ENCODE measurements at regions of chr2 and their contacts with region 1.

Region 1: DNA sequence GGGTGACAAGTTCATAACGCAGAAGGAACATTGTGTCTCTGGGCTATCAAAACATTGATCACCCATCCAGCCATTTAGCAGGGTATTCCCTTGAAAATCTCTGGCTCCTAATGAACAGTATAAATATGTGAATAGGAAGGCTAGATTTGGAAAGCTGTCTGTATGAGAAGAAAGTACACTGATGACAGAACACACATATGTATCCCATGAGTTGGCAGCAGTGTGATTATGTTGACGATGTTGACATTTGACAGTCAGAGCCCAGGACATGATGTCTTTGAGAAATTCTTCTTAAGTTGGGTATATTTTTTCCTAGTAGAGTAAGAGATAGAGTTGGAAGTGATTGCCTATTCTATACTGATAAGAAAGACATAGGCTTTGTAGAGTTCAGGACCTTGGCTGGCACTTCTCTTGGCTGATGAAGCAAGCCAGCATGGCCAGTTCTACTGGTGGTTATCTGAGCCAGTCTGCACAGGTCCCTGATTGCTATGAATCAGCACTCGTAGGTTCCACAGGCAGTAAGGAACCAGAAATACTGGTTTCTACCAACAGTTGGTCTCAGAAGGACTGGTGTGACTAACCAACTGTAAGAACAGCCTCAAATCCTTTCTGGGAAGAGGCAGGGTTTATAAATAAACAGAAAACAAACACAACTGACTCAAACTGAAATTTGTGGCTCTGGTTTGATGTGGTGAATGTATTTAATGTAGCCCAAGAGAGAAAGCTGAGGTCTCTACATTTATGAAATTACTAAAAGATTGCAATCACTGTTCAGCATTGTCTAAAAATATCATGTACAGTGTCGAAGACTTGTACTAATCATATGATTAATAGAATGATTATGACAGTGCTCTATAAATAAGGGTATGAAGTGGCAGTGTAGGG is 43.9 kb upstream of the RAPH1 start:
- DNase-seq: peak; percentile 54
- H3K4me3 Mint-ChIP-seq: no peak overlapping the region
- H3K27ac Mint-ChIP-seq: peak overlapping the region; percentile 67
- H3K4me1 Mint-ChIP-seq: peaks cover 38% of the 10 kb centered on the region
- H3K27me3 Mint-ChIP-seq: peaks cover 41% of the 10 kb centered on the region

Region 2: DNA sequence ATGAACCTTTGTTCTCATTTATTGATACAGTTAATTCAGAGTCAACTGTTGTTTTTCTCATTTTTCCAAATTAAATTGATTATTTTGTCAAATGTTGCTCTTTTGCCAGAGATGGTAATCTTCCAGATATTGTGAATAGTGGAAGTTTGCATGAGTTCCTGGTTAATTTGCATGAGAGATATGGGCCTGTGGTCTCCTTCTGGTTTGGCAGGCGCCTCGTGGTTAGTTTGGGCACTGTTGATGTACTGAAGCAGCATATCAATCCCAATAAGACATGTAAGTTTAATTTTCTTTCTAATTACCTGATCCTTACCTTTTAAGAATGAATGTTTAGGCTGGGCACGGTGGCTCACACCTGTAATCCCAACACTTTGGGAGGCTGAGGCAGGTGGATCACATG is 332.4 kb before region 1 on chr2:
- intact Hi-C with region 1: no loop called
- DNase-seq: no peak
- H3K4me3 Mint-ChIP-seq: no peak overlapping the region
- H3K27ac Mint-ChIP-seq: no peak overlapping the region
- H3K4me1 Mint-ChIP-seq: peaks cover 11% of the 10 kb centered on the region
- H3K27me3 Mint-ChIP-seq: no peaks in the 10 kb centered on the region

Region 3: GRCh38 chr2:203484266-203485112 is 94.5 kb before region 1 on chr2:
- intact Hi-C with region 1: loop called (anchors 1 kb)
- DNase-seq: peak; percentile 33
- H3K4me3 Mint-ChIP-seq: no peak overlapping the region
- H3K27ac Mint-ChIP-seq: no peak overlapping the region
- H3K4me1 Mint-ChIP-seq: peaks cover 6% of the 10 kb centered on the region
- H3K27me3 Mint-ChIP-seq: no peaks in the 10 kb centered on the region

Region 4: GRCh38 chr2:203535078-203535783 is 43.8 kb before region 1 on chr2 and contains the start of gene RAPH1:
- intact Hi-C with region 1: loop called (anchors 1 kb)
- DNase-seq: peak; percentile 50
- H3K4me3 Mint-ChIP-seq: peak within 1 kb of the TSS; percentile 87
- H3K27ac Mint-ChIP-seq: peak within 1 kb of the TSS; percentile 78
- H3K4me1 Mint-ChIP-seq: peaks cover 22% of the 10 kb centered on the region
- H3K27me3 Mint-ChIP-seq: peaks cover 57% of the 10 kb centered on the region
- total RNA-seq, gene RAPH1: 2.8 and 4.6 TPM in 2 replicates

Region 5: DNA sequence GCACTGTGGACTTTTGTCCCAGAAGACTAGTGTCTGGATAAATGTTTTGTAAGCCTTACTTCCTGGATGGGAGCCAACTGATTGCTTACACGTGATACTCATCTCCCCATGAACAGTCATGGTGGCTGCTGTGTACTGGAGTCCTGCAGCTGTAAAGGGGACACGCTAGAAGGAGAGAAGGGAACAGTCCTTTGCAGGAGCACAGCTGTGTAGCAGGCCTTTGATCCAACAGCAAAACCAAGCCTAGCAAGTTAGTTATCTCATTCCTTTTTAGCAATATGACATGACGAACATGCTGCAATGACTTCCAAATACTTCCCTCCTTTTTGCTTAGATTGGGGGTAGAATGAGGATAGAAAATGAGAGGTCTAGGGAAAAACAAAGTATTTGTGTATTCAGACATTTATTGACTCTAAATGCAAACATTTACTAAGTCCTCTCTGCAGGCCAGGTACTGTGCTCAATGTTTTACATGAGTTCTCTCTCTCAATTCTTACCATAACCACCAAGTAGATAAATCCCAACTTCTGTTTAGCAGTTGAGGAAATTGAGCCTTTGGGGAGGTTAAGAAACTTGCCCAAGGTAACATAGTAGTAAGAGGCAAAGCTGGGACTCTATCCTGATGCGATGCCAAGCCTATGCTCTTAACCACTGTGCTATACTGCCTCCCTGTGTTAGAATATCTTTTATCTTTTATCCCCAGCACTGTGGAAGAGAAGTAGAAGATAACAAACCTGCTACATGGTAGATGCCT is 72.0 kb after region 1 on chr2:
- intact Hi-C with region 1: loop called (anchors 5 kb)
- DNase-seq: no peak
- H3K4me3 Mint-ChIP-seq: no peak overlapping the region
- H3K27ac Mint-ChIP-seq: no peak overlapping the region
- H3K4me1 Mint-ChIP-seq: peaks cover 29% of the 10 kb centered on the region
- H3K27me3 Mint-ChIP-seq: peaks cover 5% of the 10 kb centered on the region

Region 6: GRCh38 chr2:203893401-203893800 is 314.4 kb after region 1 on chr2:
- intact Hi-C with region 1: loop called (anchors 2 kb)
- DNase-seq: no peak
- H3K4me3 Mint-ChIP-seq: no peak overlapping the region
- H3K27ac Mint-ChIP-seq: peak overlapping the region; percentile 92
- H3K4me1 Mint-ChIP-seq: peaks cover 79% of the 10 kb centered on the region
- H3K27me3 Mint-ChIP-seq: no peaks in the 10 kb centered on the region